SK-N-SH (cell line): ENCODE measurements at regions of chr1 and their contacts with region 1.

Region 1: GRCh38 chr1:6523566-6523965 is 30.7 kb downstream of the NOL9 start:
- DNase-seq: peak; percentile 77
- H3K4me3 ChIP-seq: no peak overlapping the region
- H3K27ac ChIP-seq: peak overlapping the region in 1 of 2 experiments; percentile 39; a peak in 2 of 4 replicates
- H3K4me1 ChIP-seq: peaks cover 0 to 28% of the 10 kb centered on the region in 2 experiments; a peak in 2 of 4 replicates
- H3K27me3 ChIP-seq: no peaks in the 10 kb centered on the region
- CTCF ChIP-seq: peak; percentile 69
- EP300 ChIP-seq: no peak
- RAD21 ChIP-seq: peak; percentile 88

Region 2: GRCh38 chr1:6489799-6490180 is 33.8 kb before region 1 on chr1:
- CTCF ChIA-PET with region 1: interaction called, 439 read pairs
- POLR2A ChIA-PET with region 1: interaction called, 4 read pairs
- DNase-seq: peak; percentile 95
- H3K4me3 ChIP-seq: peak overlapping the region; percentile 75 to 76
- H3K27ac ChIP-seq: peak overlapping the region; percentile 74 to 79; a peak in 2 of 4 replicates
- H3K4me1 ChIP-seq: peaks cover 0 to 53% of the 10 kb centered on the region in 2 experiments; a peak in 1 of 4 replicates
- H3K27me3 ChIP-seq: no peaks in the 10 kb centered on the region
- CTCF ChIP-seq: peak; percentile 78
- EP300 ChIP-seq: no peak
- RAD21 ChIP-seq: peak; percentile 60

Region 3: GRCh38 chr1:6497183-6497897 is 26.2 kb before region 1 on chr1:
- CTCF ChIA-PET with region 1: interaction called, 439 read pairs
- POLR2A ChIA-PET with region 1: interaction called, 8 read pairs
- DNase-seq: peak; percentile 92
- H3K4me3 ChIP-seq: peak overlapping the region; percentile 65 to 69
- H3K27ac ChIP-seq: peak overlapping the region in 1 of 2 experiments; percentile 80; a peak in 2 of 4 replicates
- H3K4me1 ChIP-seq: peaks cover 0 to 74% of the 10 kb centered on the region in 2 experiments; a peak in 2 of 4 replicates
- H3K27me3 ChIP-seq: no peaks in the 10 kb centered on the region
- CTCF ChIP-seq: no peak
- EP300 ChIP-seq: no peak
- RAD21 ChIP-seq: no peak

Region 4: GRCh38 chr1:6513320-6513801 is 10.2 kb before region 1 on chr1:
- CTCF ChIA-PET with region 1: interaction called, 14 read pairs
- POLR2A ChIA-PET with region 1: no interaction called
- DNase-seq: no peak
- H3K4me3 ChIP-seq: no peak overlapping the region
- H3K27ac ChIP-seq: peak overlapping the region in 1 of 2 experiments; percentile 93; a peak in 2 of 4 replicates
- H3K4me1 ChIP-seq: peaks cover 0 to 65% of the 10 kb centered on the region in 2 experiments; a peak in 2 of 4 replicates
- H3K27me3 ChIP-seq: no peaks in the 10 kb centered on the region
- CTCF ChIP-seq: no peak
- EP300 ChIP-seq: no peak
- RAD21 ChIP-seq: no peak

Region 5: DNA sequence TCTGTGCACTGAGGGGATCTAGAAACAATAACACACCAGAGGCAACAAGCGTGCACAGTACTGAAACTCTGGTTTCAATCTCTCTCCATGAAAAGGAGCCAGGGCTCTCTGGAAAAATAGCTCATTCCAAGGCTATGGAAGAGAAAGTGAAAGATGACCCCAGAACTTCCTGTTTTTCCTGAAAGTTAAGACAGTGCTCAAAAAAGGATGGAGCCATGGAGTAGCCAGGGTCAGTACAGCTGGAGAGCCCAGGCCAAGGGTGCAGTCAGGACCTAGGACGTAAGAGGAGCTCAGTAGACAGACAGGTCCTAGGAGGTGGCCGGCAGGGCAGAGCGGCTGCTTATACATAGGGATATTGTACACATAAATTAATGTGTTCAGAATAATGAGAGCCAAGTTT is 11.6 kb after region 1 on chr1:
- CTCF ChIA-PET with region 1: interaction called, 27 read pairs
- POLR2A ChIA-PET with region 1: no interaction called
- DNase-seq: no peak
- H3K4me3 ChIP-seq: no peak overlapping the region
- H3K27ac ChIP-seq: no peak overlapping the region
- H3K4me1 ChIP-seq: no peaks in the 10 kb centered on the region
- H3K27me3 ChIP-seq: no peaks in the 10 kb centered on the region
- CTCF ChIP-seq: no peak
- EP300 ChIP-seq: no peak
- RAD21 ChIP-seq: no peak

Region 6: GRCh38 chr1:6627841-6628545 is 104.4 kb after region 1 on chr1:
- CTCF ChIA-PET with region 1: no interaction called
- POLR2A ChIA-PET with region 1: no interaction called
- DNase-seq: no peak
- H3K4me3 ChIP-seq: no peak overlapping the region
- H3K27ac ChIP-seq: no peak overlapping the region
- H3K4me1 ChIP-seq: peaks cover 0 to 5% of the 10 kb centered on the region in 2 experiments; a peak in 1 of 4 replicates
- H3K27me3 ChIP-seq: no peaks in the 10 kb centered on the region
- CTCF ChIP-seq: no peak
- EP300 ChIP-seq: no peak
- RAD21 ChIP-seq: no peak